AG04449 (cell line): ENCODE measurements at regions of chr7 and their contacts with region 1.

Region 1: DNA sequence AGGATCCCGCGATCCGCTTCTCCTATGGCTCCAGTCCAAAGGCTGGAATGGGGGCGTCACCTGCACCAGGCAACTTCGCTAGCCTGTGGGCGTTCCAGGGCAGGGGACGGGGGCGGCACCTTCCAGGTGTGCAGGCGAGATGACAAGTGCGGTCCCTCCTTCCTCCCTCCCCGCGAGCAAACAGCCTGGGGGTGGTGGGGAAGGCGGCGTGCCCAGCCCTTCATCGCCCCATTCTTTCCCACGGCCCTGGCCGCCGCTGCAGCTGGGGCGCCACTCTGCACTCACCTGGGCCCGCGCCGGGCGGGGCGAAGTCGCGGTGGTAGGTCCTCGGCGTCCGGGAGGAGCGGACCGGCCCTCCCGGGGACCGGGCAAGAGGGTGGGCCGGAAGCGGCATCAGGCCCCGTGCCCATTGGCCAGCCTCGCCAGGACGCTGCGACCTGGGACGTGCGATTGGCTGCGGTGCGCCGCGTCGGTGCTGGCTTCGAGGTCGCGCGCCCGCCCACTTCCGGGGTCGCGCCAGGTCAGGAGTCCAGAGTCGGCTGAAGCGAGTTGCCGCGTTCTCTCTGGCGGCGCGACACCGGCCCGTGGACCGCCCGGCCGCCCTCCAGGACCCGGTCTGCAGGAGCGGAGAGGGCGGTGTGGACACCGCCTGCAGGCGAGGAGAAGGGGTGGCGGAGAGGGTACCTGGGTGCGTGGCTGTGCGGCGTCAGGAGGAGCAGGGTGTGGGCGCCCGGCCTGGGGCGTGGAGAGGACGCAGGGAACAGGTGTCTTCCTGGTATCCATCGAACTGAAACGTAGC is at the start of gene TECPR1:
- DNase-seq: no peak
- H3K4me3 ChIP-seq: peak within 1 kb of the TSS; percentile 96
- CTCF ChIP-seq: peak; percentile 15

Region 2: GRCh38 chr7:98240961-98241674 is 10.9 kb before region 1 on chr7:
- CTCF ChIA-PET with region 1: interaction called, 14 read pairs
- POLR2A ChIA-PET with region 1: no interaction called
- DNase-seq: no peak
- H3K4me3 ChIP-seq: no peak overlapping the region
- CTCF ChIP-seq: peak; percentile 79